Transverse colon (tissue), 4 donors: ENCODE measurements at regions of chr3 and their contacts with region 1.

Region 1: GRCh38 chr3:195259475-195260279 is 11.3 kb downstream of the XXYLT1 start:
- DNase-seq: peak; percentile 93
- H3K4me3 ChIP-seq: peak overlapping the region; percentile 31 to 76 (median 64)
- H3K27ac ChIP-seq: peak overlapping the region; percentile 88 to 95 (median 92)
- H3K4me1 ChIP-seq: peaks cover 21 to 32% (median 26%) of the 10 kb centered on the region in 4 donors
- H3K27me3 ChIP-seq: no peaks in the 10 kb centered on the region
- CTCF ChIP-seq: peak; percentile 21 to 68 (median 56)
- EP300 ChIP-seq: no peak
- POLR2A ChIP-seq: peak; percentile 52

Region 2: GRCh38 chr3:194671900-194672808 is 587.5 kb before region 1 on chr3 and contains the start of gene LSG1:
- in situ Hi-C with region 1: loop called in 2 of 4 experiments (anchors 10 kb)
- intact Hi-C with region 1: no loop called
- DNase-seq: peak; percentile 94
- H3K4me3 ChIP-seq: peak within 1 kb of the TSS; percentile 62 to 87 (median 69)
- H3K27ac ChIP-seq: peak within 1 kb of the TSS; percentile 84 to 92 (median 90)
- H3K4me1 ChIP-seq: peaks cover 13 to 23% (median 14%) of the 10 kb centered on the region in 4 donors
- H3K27me3 ChIP-seq: peaks cover 3% of the 10 kb centered on the region
- CTCF ChIP-seq: no peak
- EP300 ChIP-seq: no peak
- POLR2A ChIP-seq: peak; percentile 51
- total RNA-seq, gene LSG1: 18.7 to 69.9 (median 52.8) TPM

Region 3: DNA sequence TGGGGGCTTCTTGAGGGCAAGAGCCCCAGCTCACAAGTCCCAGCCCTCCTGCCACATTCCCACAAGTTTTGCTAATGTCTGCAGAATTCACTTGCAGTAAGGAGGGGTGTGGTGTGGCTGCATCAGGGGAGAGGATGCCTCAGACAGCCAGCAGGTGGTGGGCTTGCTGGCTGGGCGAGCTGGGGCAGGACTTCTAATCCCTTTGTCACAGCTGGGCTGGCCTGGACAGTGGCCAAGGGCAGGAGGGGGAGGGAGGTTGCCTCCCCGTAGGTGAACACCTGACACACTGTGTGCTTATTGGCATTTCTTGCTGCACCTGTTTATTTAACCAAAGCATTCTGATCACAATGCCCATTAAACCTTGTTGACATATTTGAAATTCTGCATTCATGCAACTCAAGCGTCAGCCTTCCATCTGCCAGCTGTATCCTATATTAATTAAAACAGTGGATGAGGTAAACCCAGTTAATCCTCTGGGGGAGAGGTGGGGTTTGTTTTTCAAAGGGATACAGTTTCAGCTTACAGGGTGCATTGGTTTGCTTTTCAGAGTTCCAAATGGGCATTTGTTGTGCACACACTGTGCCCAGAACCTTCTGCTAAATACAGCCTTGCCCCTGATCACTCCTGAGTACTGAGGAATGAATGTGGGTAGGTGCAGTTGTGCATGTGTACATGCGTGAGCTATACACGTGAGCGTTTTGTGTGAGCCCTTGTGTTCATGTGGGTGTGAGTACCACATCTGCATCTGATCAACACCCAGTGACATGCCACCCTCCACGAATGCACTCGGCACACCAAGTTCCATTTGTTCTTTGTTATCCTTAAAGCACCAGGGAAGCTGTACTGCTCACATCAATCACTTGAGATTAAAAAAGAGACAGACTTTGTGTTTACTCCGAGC is 257.5 kb before region 1 on chr3:
- in situ Hi-C with region 1: no loop called
- intact Hi-C with region 1: loop called (anchors 10 kb)
- DNase-seq: peak; percentile 78
- H3K4me3 ChIP-seq: no peak overlapping the region
- H3K27ac ChIP-seq: no peak overlapping the region
- H3K4me1 ChIP-seq: peaks cover 0 to 4% (median 2%) of the 10 kb centered on the region in 4 donors
- H3K27me3 ChIP-seq: peaks cover 7% of the 10 kb centered on the region
- CTCF ChIP-seq: peak; percentile 37 to 66 (median 46)
- EP300 ChIP-seq: no peak
- POLR2A ChIP-seq: no peak

Region 4: GRCh38 chr3:195106418-195106906 is 153.2 kb before region 1 on chr3:
- in situ Hi-C with region 1: no loop called
- intact Hi-C with region 1: loop called (anchors 5 kb)
- DNase-seq: peak; percentile 65
- H3K4me3 ChIP-seq: peak overlapping the region in 1 of 4 donors; percentile 29
- H3K27ac ChIP-seq: no peak overlapping the region
- H3K4me1 ChIP-seq: peaks cover 0 to 28% (median 9%) of the 10 kb centered on the region in 4 donors
- H3K27me3 ChIP-seq: no peaks in the 10 kb centered on the region
- CTCF ChIP-seq: peak; percentile 97 to 100 (median 100)
- EP300 ChIP-seq: no peak
- POLR2A ChIP-seq: no peak

Region 5: DNA sequence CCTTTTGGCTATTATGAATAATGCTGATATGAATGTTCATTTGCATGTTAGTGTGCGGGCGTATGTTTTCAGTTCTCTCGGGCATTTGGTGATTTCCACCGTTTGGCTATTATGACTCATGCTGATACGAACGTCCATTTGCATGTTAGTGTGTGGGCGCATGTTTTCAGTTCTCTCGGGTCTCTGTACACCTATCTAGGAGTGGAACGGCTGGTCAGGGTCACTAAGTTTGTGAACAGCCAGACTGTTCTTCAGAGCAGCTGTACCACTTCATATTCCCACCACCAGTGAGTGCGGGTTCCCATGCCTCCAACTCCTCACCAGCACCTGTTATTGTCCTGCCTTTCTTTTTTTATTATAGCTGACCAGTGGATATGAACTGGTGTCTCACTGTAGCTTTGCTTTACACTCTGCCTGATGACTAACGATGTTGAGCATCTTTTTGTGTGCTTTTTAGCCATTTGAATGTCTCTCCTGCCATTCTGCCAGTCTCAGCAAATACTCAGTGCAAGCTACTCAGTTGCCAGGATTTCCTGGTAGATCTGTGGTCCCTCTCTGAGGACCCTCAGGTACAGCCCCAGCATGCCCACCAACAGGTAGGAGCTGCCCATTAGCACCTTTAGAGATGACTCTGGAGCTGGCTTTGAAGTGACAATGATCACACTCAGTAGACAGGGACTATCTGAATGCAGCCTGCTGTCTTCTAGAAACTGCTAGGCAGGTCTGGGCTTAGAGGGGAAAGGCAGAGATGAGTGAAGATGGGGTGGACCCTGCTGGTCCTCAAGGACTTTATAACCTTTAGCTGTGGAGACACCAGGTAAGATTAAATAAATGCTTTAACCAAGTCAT is 129.8 kb before region 1 on chr3:
- in situ Hi-C with region 1: loop called in 1 of 4 experiments (anchors 10 kb)
- intact Hi-C with region 1: no loop called
- DNase-seq: no peak
- H3K4me3 ChIP-seq: no peak overlapping the region
- H3K27ac ChIP-seq: no peak overlapping the region
- H3K4me1 ChIP-seq: peaks cover 0 to 14% (median 5%) of the 10 kb centered on the region in 4 donors
- H3K27me3 ChIP-seq: no peaks in the 10 kb centered on the region
- CTCF ChIP-seq: no peak
- EP300 ChIP-seq: no peak
- POLR2A ChIP-seq: no peak

Region 6: DNA sequence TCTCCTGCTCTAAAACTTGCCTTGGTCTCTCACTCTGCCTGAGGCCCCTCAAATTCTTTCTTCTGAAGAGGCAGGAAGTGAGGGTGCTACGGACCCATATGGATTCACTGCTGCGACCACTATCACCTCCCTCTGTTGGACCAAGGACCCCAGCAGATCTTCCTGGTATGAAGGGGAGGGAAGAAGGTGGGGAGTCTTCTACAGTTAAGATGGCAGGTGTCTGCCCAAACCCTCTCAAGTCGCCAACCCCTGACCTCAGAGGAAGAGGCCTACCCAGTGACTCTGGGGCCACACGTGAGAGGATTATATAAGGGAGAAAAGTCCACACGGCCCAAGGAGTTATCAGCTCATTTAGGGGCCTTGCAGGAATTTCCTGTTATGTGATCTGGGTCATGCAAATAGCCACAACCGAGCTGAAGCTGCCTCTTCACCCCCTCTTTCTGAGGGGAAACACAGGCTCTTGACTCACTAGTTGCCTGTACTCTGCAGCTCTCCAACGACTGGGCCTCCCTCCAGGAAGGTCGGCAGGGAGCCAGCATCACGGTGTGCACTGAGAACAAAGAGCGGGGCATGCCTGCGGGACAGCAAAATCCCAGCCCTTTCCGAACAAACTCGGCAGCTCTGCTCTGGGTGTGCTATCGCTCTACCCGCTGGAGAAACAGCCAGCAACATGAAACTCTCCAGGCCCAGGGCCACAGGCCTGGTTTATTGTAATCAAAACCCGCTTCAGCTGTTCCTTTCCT is 104.7 kb before region 1 on chr3:
- in situ Hi-C with region 1: no loop called
- intact Hi-C with region 1: loop called (anchors 10 kb)
- DNase-seq: peak; percentile 82
- H3K4me3 ChIP-seq: peak overlapping the region in 1 of 4 donors; percentile 3
- H3K27ac ChIP-seq: peak overlapping the region; percentile 80 to 89 (median 85)
- H3K4me1 ChIP-seq: peaks cover 44 to 72% (median 52%) of the 10 kb centered on the region in 4 donors
- H3K27me3 ChIP-seq: no peaks in the 10 kb centered on the region
- CTCF ChIP-seq: no peak
- EP300 ChIP-seq: no peak
- POLR2A ChIP-seq: no peak

Region 7: DNA sequence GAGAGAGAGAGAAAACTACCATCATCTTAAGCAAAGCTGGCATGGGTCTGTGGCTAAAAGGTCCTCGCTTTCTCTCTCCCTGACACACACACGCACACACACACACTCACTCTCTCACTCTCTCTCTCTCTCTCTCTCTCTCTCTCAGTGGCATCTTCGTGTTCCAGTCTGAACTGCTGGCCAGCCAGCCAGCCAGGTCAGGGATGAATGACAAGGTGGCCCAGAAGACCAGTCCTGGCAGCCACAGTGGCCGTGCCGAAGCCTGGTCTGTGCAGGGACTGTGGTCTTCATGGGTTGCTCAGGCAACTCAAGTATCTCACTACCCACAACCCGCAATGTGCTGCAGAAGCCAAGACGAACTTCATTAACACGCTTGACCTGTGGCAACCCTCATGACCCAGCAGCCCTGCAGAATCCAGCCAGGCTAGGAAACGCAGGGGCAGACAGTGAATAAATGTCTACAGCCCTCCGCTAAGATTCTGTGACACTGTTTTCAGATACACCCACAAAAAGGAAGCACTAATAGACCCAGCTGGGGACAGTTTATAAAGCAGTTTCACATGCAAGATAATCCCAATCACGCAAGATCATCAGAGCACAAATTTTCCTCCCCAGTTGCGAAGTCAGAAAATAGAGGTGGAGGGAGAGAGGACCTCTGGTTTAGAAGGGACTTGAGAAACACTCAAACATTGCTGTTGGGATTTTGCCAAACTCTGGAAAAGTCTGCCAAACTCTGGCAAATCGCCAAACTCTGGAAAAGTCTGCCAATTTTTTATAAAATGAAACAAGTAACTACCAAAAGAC is 55.1 kb before region 1 on chr3:
- in situ Hi-C with region 1: no loop called
- intact Hi-C with region 1: no loop called
- DNase-seq: no peak
- H3K4me3 ChIP-seq: no peak overlapping the region
- H3K27ac ChIP-seq: peak overlapping the region; percentile 47 to 64 (median 54)
- H3K4me1 ChIP-seq: peaks cover 9 to 35% (median 12%) of the 10 kb centered on the region in 4 donors
- H3K27me3 ChIP-seq: no peaks in the 10 kb centered on the region
- CTCF ChIP-seq: no peak
- EP300 ChIP-seq: no peak
- POLR2A ChIP-seq: no peak

Region 8: GRCh38 chr3:195583831-195584542 is 324.3 kb after region 1 on chr3 and contains the start of gene APOD:
- in situ Hi-C with region 1: no loop called
- intact Hi-C with region 1: no loop called
- DNase-seq: peak; percentile 49
- H3K4me3 ChIP-seq: no peak within 1 kb of the TSS
- H3K27ac ChIP-seq: peak within 1 kb of the TSS in 2 of 4 donors; percentile 18 to 41
- H3K4me1 ChIP-seq: peaks cover 0 to 4% (median 0%) of the 10 kb centered on the region in 4 donors
- H3K27me3 ChIP-seq: no peaks in the 10 kb centered on the region
- CTCF ChIP-seq: no peak
- EP300 ChIP-seq: no peak
- POLR2A ChIP-seq: no peak
- total RNA-seq, gene APOD: 3.4 to 118 (median 46.1) TPM